ENCODE measurements at regions of chr5 and their contacts with region 1.

Region 1: GRCh38 chr5:132456296-132457001 is 34.1 kb downstream of the IRF1 start:
- DNase-seq: peak in 8 of 9 experiments; percentile 53 to 90 (median 77)
- ATAC-seq: peak; percentile 55
- H3K4me3 ChIP-seq: peak overlapping the region; percentile 21 to 30
- H3K4me3 Mint-ChIP-seq: peak overlapping the region; percentile 65
- H3K27ac ChIP-seq: peak overlapping the region; percentile 89 to 91
- H3K27ac Mint-ChIP-seq: peak overlapping the region; percentile 99
- H3K4me1 ChIP-seq: peaks cover 90% of the 10 kb centered on the region
- H3K4me1 Mint-ChIP-seq: peaks cover 92% of the 10 kb centered on the region
- H3K27me3 ChIP-seq: no peaks in the 10 kb centered on the region
- H3K27me3 Mint-ChIP-seq: no peaks in the 10 kb centered on the region
- CTCF ChIP-seq: no peak

Region 2: DNA sequence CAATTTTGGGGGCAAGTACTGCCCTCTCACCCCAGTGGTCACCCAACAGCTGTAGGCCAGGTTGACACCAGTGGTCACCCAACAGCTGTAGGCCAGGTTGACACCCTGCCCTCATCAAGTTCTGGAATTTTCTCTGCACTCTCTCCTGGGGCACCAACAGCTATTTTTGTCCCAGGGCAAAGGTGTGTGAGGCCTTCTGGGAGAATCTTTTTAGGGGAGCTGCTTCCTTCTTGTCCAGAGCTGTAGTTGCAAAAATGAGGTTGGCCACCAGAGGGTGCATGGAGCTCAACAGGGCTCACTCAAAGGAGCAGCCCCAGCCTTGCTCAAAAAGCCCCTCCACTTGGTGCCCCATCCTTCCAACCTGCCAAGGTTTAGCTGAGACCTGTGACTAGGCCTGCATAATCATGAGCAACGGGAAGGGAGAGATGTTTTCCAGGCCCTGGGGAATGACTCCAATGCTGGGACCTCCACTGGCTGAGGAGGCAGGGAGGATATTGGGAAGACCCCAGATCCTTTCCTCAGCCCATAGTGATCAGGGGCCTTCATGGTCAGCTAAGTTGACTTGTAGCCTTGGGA is 218.2 kb before region 1 on chr5:
- CTCF ChIA-PET with region 1: no interaction called
- POLR2A ChIA-PET with region 1: no interaction called
- intact Hi-C with region 1: no loop called
- DNase-seq: peak; percentile 45 to 78 (median 70)
- ATAC-seq: peak; percentile 89
- H3K4me3 ChIP-seq: no peak overlapping the region
- H3K4me3 Mint-ChIP-seq: no peak overlapping the region
- H3K27ac ChIP-seq: no peak overlapping the region
- H3K27ac Mint-ChIP-seq: no peak overlapping the region
- H3K4me1 ChIP-seq: no peaks in the 10 kb centered on the region
- H3K4me1 Mint-ChIP-seq: no peaks in the 10 kb centered on the region
- H3K27me3 ChIP-seq: no peaks in the 10 kb centered on the region
- H3K27me3 Mint-ChIP-seq: no peaks in the 10 kb centered on the region
- CTCF ChIP-seq: peak; percentile 73

Region 3: DNA sequence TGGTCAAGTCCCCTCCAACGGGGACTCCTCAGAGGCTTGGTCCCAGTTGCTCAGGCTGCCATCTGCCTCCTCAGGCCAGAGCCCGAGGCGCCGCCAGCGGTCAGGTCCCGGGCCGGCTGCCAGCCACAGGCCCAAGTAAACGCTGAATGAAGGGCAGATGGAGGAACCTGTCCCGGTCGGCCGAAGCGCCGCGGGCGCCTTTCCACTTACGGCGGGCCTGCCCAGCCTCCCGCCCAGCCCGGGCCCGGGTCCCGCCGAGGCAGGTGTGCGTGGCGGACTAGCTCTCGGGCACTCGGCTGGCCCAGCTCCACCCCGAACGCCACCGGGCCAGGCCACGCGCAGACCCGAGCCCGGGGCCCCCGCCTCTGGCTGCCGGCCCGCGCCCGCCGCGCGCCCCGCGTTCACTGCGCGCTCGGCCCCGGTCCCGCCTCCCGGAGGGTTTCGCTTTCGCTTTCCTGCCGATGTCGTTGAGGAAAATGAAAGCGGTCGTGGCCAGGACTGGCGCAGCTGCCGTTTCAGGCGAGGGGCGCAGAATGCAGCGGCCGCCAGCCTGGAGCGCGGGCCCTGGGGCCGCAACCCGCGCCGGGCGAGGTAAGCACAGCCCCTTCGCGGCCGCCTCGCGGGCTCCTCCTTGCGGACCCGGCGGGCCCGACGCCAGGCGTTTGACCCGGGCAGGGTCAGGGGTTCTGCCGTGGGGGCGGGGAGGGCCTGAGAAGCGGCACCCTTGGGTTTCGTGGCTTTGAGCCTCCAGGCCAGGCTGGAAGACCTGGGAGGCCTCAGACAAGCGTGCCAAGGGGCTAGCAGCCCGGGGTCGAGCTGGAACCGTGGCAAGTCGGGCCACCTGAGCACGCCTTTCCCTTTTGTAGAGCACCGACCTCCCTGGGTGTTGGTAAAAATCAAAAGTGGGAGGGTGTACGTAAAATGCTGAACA is 45.7 kb before region 1 on chr5:
- CTCF ChIA-PET with region 1: interaction called, 32 read pairs
- POLR2A ChIA-PET with region 1: interaction called, 45 read pairs
- intact Hi-C with region 1: no loop called
- DNase-seq: peak; percentile 61 to 93 (median 80)
- ATAC-seq: peak; percentile 66
- H3K4me3 ChIP-seq: peak overlapping the region; percentile 73 to 94
- H3K4me3 Mint-ChIP-seq: peak overlapping the region; percentile 95
- H3K27ac ChIP-seq: peak overlapping the region; percentile 96 to 98
- H3K27ac Mint-ChIP-seq: peak overlapping the region; percentile 98
- H3K4me1 ChIP-seq: peaks cover 79% of the 10 kb centered on the region
- H3K4me1 Mint-ChIP-seq: peaks cover 80% of the 10 kb centered on the region
- H3K27me3 ChIP-seq: no peaks in the 10 kb centered on the region
- H3K27me3 Mint-ChIP-seq: no peaks in the 10 kb centered on the region
- CTCF ChIP-seq: peak; percentile 44

Region 4: GRCh38 chr5:132419502-132420468 is 36.7 kb before region 1 on chr5:
- CTCF ChIA-PET with region 1: interaction called, 32 read pairs
- POLR2A ChIA-PET with region 1: interaction called, 105 read pairs
- intact Hi-C with region 1: no loop called
- DNase-seq: peak; percentile 27 to 84 (median 64)
- ATAC-seq: peak; percentile 71
- H3K4me3 ChIP-seq: peak overlapping the region; percentile 6 to 9
- H3K4me3 Mint-ChIP-seq: peak overlapping the region; percentile 80
- H3K27ac ChIP-seq: peak overlapping the region; percentile 38 to 98
- H3K27ac Mint-ChIP-seq: peak overlapping the region; percentile 94
- H3K4me1 ChIP-seq: peaks cover 82% of the 10 kb centered on the region
- H3K4me1 Mint-ChIP-seq: peaks cover 92% of the 10 kb centered on the region
- H3K27me3 ChIP-seq: no peaks in the 10 kb centered on the region
- H3K27me3 Mint-ChIP-seq: no peaks in the 10 kb centered on the region
- CTCF ChIP-seq: peak; percentile 89

Region 5: GRCh38 chr5:132426525-132427138 is 29.8 kb before region 1 on chr5:
- CTCF ChIA-PET with region 1: interaction called, 25 read pairs
- POLR2A ChIA-PET with region 1: interaction called, 105 read pairs
- intact Hi-C with region 1: loop called (anchors 1 to 2 kb)
- DNase-seq: peak in 8 of 9 experiments; percentile 52 to 85 (median 66)
- ATAC-seq: peak; percentile 13
- H3K4me3 ChIP-seq: peak overlapping the region; percentile 17 to 31
- H3K4me3 Mint-ChIP-seq: peak overlapping the region; percentile 71
- H3K27ac ChIP-seq: peak overlapping the region; percentile 77 to 98
- H3K27ac Mint-ChIP-seq: peak overlapping the region; percentile 97
- H3K4me1 ChIP-seq: peaks cover 99% of the 10 kb centered on the region
- H3K4me1 Mint-ChIP-seq: peaks cover 95% of the 10 kb centered on the region
- H3K27me3 ChIP-seq: no peaks in the 10 kb centered on the region
- H3K27me3 Mint-ChIP-seq: no peaks in the 10 kb centered on the region
- CTCF ChIP-seq: no peak

Region 6: DNA sequence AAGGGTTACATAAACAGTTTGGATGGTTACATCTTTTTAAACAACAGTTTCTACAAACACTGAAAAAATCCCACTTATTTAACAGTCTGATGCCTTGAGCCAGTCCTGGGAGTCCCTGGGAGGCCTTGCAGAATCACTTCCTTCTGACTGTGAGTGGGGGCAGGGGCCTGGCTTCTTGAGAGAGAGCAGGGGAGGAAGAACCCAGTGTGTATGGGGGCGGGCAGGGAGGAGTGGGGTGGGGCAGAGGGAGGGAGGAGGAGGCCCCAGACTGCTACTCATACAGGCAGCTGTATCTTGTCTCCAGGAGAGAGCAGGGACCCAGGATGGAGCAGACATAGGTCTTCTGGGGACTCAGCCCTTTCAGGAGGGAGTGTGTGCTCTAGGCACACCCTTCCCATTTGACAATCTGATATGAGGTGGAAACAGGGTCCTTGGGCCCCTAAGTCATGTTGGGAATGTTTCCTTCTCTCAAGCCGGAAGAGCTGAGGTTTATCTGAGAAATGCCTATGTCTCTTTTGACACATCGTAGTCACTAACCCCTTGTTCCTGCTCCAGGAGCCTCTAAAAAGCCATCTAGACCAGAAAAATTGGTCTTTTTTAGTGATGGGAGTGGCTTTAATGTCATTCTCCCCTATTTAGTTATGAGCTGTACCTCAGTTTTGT is 18.7 kb before region 1 on chr5:
- CTCF ChIA-PET with region 1: interaction called, 7 read pairs
- POLR2A ChIA-PET with region 1: interaction called, 54 read pairs
- intact Hi-C with region 1: loop called (anchors 1 to 2 kb)
- DNase-seq: peak in 8 of 9 experiments; percentile 43 to 85 (median 67)
- ATAC-seq: peak; percentile 92
- H3K4me3 ChIP-seq: no peak overlapping the region
- H3K4me3 Mint-ChIP-seq: peak overlapping the region; percentile 63
- H3K27ac ChIP-seq: peak overlapping the region; percentile 31 to 77
- H3K27ac Mint-ChIP-seq: peak overlapping the region; percentile 87
- H3K4me1 ChIP-seq: peaks cover 88% of the 10 kb centered on the region
- H3K4me1 Mint-ChIP-seq: peaks cover 90% of the 10 kb centered on the region
- H3K27me3 ChIP-seq: no peaks in the 10 kb centered on the region
- H3K27me3 Mint-ChIP-seq: no peaks in the 10 kb centered on the region
- CTCF ChIP-seq: no peak

Region 7: GRCh38 chr5:132466433-132467286 is 10.2 kb after region 1 on chr5:
- CTCF ChIA-PET with region 1: interaction called, 120 read pairs
- POLR2A ChIA-PET with region 1: interaction called, 121 read pairs
- intact Hi-C with region 1: loop called in 1 of 2 experiments (anchors 1 kb)
- DNase-seq: peak; percentile 53 to 92 (median 74)
- ATAC-seq: peak; percentile 63
- H3K4me3 ChIP-seq: peak overlapping the region; percentile 25 to 28
- H3K4me3 Mint-ChIP-seq: peak overlapping the region; percentile 68
- H3K27ac ChIP-seq: peak overlapping the region; percentile 51 to 85
- H3K27ac Mint-ChIP-seq: peak overlapping the region; percentile 95
- H3K4me1 ChIP-seq: peaks cover 88% of the 10 kb centered on the region
- H3K4me1 Mint-ChIP-seq: peaks cover 96% of the 10 kb centered on the region
- H3K27me3 ChIP-seq: no peaks in the 10 kb centered on the region
- H3K27me3 Mint-ChIP-seq: no peaks in the 10 kb centered on the region
- CTCF ChIP-seq: no peak

Region 8: GRCh38 chr5:132473019-132473531 is 16.6 kb after region 1 on chr5:
- CTCF ChIA-PET with region 1: interaction called, 120 read pairs
- POLR2A ChIA-PET with region 1: interaction called, 121 read pairs
- intact Hi-C with region 1: loop called (anchors 1 to 2 kb)
- DNase-seq: peak; percentile 70 to 97 (median 85)
- ATAC-seq: peak; percentile 73
- H3K4me3 ChIP-seq: no peak overlapping the region
- H3K4me3 Mint-ChIP-seq: peak overlapping the region; percentile 5
- H3K27ac ChIP-seq: peak overlapping the region; percentile 52 to 93
- H3K27ac Mint-ChIP-seq: peak overlapping the region; percentile 87
- H3K4me1 ChIP-seq: peaks cover 82% of the 10 kb centered on the region
- H3K4me1 Mint-ChIP-seq: peaks cover 92% of the 10 kb centered on the region
- H3K27me3 ChIP-seq: no peaks in the 10 kb centered on the region
- H3K27me3 Mint-ChIP-seq: no peaks in the 10 kb centered on the region
- CTCF ChIP-seq: no peak